MCF 10A (cell line): ENCODE measurements at regions of chr4 and their contacts with region 1.

Region 1: DNA sequence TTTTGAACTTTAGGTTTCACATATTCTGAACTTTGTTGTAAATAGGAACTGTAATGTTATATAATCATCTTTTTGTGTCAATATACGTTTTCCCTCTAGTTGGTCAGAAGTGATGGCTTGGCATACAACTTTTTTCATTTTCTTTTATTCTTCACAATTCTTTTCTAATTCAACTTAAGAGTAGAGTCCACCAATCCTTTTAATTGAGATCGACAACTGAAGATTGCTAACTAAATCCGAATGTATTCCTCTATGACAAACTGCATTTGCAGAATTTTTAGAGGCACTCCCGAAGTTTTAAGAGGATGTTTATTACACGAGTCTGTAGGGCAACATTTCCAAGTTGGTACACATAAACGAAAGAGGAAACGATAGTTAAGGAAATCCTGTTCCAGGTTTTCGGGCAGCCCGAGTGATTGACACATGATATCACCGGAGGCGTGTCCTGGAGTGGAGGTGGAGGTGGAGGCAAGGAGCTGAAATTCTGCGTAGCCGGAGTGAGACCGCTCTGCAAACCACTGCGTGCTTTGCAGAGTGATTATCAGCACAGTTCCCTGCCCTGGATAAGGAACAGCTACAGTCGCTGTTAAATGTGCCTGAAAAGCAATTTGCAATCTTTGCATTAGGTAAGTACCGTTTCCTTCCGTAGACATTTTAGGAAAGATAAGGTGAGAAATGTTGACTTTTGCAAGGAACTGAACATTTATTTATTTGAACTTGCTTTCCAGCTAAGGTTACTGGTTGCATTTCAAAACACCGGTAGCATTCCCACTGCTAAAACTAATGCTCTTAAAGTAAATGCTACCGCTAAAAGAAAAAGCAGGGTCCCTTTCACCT is at the start of gene SPRY1:
- DNase-seq: peak; percentile 95
- H3K4me3 Mint-ChIP-seq: peak within 1 kb of the TSS; percentile 89
- H3K27ac Mint-ChIP-seq: peak within 1 kb of the TSS; percentile 71
- H3K4me1 Mint-ChIP-seq: peaks cover 10% of the 10 kb centered on the region
- H3K27me3 Mint-ChIP-seq: no peaks in the 10 kb centered on the region
- CTCF ChIP-seq: no peak
- total RNA-seq, gene SPRY1: 4.3 and 5.6 TPM in 2 replicates

Region 2: DNA sequence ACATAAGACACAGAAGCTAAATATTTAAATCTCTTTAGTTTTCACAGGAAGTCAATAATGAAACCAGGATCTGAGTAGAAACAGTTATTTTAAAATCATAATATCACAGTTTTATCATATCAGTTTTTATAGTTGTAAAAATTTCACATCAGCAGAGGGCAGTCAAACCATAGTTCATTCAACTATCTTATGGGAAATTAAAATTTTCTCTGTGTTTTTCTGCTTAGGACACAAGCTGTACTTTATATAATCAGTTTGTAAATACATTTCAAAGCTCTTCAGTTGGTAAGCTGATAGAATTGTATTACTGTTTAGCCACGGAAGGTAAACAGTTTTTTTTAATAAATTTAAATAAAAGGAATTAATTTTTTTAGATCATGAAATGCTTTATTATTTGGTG is 269.3 kb before region 1 on chr4:
- CTCF ChIA-PET with region 1: interaction called, 9 read pairs
- POLR2A ChIA-PET with region 1: interaction called, 12 read pairs
- intact Hi-C with region 1: loop called (anchors 1 kb)
- DNase-seq: peak; percentile 16
- H3K4me3 Mint-ChIP-seq: no peak overlapping the region
- H3K27ac Mint-ChIP-seq: no peak overlapping the region
- H3K4me1 Mint-ChIP-seq: no peaks in the 10 kb centered on the region
- H3K27me3 Mint-ChIP-seq: no peaks in the 10 kb centered on the region
- CTCF ChIP-seq: peak; percentile 42

Region 3: GRCh38 chr4:123418351-123418931 is 21.9 kb after region 1 on chr4:
- CTCF ChIA-PET with region 1: interaction called, 3 read pairs
- POLR2A ChIA-PET with region 1: interaction called, 13 read pairs
- intact Hi-C with region 1: no loop called
- DNase-seq: peak; percentile 87
- H3K4me3 Mint-ChIP-seq: no peak overlapping the region
- H3K27ac Mint-ChIP-seq: no peak overlapping the region
- H3K4me1 Mint-ChIP-seq: peaks cover 16% of the 10 kb centered on the region
- H3K27me3 Mint-ChIP-seq: no peaks in the 10 kb centered on the region
- CTCF ChIP-seq: no peak

Region 4: GRCh38 chr4:123536225-123536624 is 139.7 kb after region 1 on chr4:
- CTCF ChIA-PET with region 1: no interaction called
- POLR2A ChIA-PET with region 1: no interaction called
- intact Hi-C with region 1: no loop called
- DNase-seq: no peak
- H3K4me3 Mint-ChIP-seq: no peak overlapping the region
- H3K27ac Mint-ChIP-seq: no peak overlapping the region
- H3K4me1 Mint-ChIP-seq: no peaks in the 10 kb centered on the region
- H3K27me3 Mint-ChIP-seq: no peaks in the 10 kb centered on the region
- CTCF ChIP-seq: no peak

Region 5: DNA sequence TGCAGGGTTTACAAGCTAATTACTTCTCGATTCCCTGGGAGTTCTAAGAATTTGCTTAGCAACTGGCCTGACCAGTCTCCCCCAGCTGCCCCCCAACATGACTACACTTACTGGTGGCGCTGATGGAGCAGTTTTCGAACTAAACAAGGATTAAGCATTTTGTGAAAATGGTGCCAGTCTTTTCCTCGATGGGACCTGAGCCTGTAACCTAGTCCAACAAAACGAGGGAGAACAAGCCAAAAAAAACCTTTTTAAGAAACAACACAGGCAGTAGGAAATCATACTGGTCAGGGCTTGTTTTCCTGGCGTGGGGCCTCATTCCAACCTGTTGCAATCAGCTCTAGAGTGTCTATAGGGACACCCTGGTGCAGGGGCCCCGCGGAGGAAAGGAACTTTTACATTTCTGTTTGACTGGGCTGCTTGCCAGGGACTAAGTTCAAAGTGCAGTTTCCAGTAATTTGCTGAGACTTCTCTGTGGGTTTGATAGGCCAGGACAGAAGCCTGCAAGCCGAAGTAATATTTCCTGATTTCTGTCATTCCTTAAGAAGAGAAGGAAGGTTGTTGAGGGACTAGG is 158.8 kb after region 1 on chr4:
- CTCF ChIA-PET with region 1: interaction called, 4 read pairs
- POLR2A ChIA-PET with region 1: interaction called, 10 read pairs
- intact Hi-C with region 1: no loop called
- DNase-seq: peak; percentile 99
- H3K4me3 Mint-ChIP-seq: no peak overlapping the region
- H3K27ac Mint-ChIP-seq: peak overlapping the region; percentile 79
- H3K4me1 Mint-ChIP-seq: peaks cover 24% of the 10 kb centered on the region
- H3K27me3 Mint-ChIP-seq: no peaks in the 10 kb centered on the region
- CTCF ChIP-seq: no peak

Region 6: DNA sequence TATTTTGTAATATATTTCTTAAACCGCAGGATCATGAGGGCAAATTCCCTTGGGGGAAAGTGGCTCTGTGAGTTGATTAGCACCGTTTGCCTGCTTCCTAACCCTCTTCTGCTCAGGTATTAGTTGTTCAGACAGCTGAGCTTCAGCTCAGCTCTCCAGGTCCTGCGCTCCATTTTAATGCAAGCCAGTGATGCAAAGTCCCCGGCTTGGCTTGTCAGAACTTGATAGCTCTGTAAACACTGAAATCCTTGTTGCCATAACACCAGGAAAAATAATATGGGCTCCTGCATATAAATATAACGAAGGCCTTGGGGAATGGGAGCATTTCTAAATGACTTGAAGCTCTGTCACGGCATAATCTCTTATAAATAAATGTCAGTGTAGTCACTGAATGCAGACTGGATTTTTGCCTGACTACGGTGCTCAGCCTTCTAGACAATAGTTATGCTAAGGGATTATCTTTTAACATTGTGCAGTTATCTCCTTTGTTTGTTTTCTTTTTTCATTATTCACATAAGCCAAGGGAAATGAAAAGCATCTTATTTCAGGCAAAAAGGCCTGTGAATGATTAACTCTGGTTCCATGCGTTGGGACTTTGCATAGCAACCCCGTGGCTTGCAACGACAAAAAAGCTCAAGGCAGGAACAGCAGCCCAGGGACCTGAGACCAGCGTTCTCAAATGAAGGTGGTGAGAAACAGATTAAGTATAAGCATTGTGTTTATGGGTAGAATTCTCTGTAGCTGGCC is 253.3 kb after region 1 on chr4:
- CTCF ChIA-PET with region 1: interaction called, 6 read pairs
- POLR2A ChIA-PET with region 1: interaction called, 25 read pairs
- intact Hi-C with region 1: no loop called
- DNase-seq: peak; percentile 63
- H3K4me3 Mint-ChIP-seq: no peak overlapping the region
- H3K27ac Mint-ChIP-seq: peak overlapping the region; percentile 95
- H3K4me1 Mint-ChIP-seq: peaks cover 11% of the 10 kb centered on the region
- H3K27me3 Mint-ChIP-seq: no peaks in the 10 kb centered on the region
- CTCF ChIP-seq: no peak

Region 7: DNA sequence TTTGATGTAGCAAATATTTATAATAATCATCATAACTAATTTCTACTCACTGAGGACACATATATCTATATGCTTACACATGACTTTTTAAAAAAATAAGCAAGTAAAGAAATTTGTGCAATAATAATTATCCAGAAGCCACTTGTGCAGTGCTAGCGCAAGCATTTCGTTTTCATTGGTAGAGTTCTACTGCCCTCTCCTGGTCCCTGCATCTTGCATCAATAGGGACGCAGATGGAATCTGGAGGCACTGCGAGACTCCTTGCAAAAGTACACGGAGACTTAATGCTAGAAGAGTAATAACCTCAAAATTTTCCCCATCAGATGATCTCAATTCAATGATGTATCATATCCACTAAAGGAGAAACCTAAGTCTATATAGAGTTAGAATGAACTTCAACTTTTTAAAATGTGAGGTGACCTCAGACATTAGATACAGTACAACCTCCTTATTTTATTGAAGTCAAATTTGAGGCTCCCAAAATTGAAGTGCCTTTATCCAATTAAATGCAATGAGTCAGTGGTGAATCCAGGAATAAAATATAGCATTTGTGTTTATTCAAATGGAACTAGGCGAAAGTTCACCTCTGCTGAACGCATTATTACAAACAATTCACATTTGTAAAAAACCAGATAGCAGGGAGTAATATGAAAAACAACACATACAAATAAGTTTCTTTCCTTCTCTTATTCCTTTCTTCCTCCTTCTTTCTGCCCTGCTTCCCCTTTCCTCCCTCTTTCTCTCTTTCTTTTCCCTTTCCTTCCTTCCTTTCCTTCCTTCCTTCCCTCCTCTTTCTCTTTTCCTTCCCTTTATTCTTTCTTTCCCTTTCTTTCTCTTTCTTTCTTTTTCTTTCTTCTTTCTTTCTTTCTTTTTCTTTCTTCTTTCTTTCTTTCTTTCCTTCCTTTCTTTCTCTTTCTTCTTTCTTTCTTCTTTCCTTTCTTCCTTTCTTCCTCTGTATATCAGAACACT is 866.0 kb after region 1 on chr4:
- CTCF ChIA-PET with region 1: interaction called, 3 read pairs
- POLR2A ChIA-PET with region 1: no interaction called
- intact Hi-C with region 1: loop called (anchors 2 kb)
- DNase-seq: peak; percentile 87
- H3K4me3 Mint-ChIP-seq: no peak overlapping the region
- H3K27ac Mint-ChIP-seq: no peak overlapping the region
- H3K4me1 Mint-ChIP-seq: peaks cover 5% of the 10 kb centered on the region
- H3K27me3 Mint-ChIP-seq: no peaks in the 10 kb centered on the region
- CTCF ChIP-seq: peak; percentile 77